CD4-positive, alpha-beta memory T cell (primary cell): ENCODE measurements at regions of chr15 and their contacts with region 1.

Region 1: GRCh38 chr15:33226559-33227181 is 32.2 kb upstream of the FMN1 start:
- DNase-seq: peak; percentile 65 to 84 (median 78)
- H3K4me3 ChIP-seq: no peak overlapping the region
- H3K4me3 Mint-ChIP-seq: peak overlapping the region in 4 of 8 donors; percentile 13 to 57 (median 25)
- H3K27ac ChIP-seq: no peak overlapping the region
- H3K27ac Mint-ChIP-seq: peak overlapping the region in 3 of 7 donors; percentile 64 to 77 (median 65)
- H3K4me1 ChIP-seq: peaks cover 18% of the 10 kb centered on the region
- H3K4me1 Mint-ChIP-seq: peaks cover 4 to 19% (median 14%) of the 10 kb centered on the region in 4 donors
- H3K27me3 ChIP-seq: no peaks in the 10 kb centered on the region
- H3K27me3 Mint-ChIP-seq: no peaks in the 10 kb centered on the region

Region 2: GRCh38 chr15:33086507-33087121 is 140.1 kb before region 1 on chr15:
- CTCF ChIA-PET with region 1: no interaction called
- POLR2A ChIA-PET with region 1: no interaction called
- intact Hi-C with region 1: loop called (anchors 5 kb)
- DNase-seq: peak in 4 of 5 donors; percentile 9 to 59 (median 44)
- H3K4me3 ChIP-seq: no peak overlapping the region
- H3K4me3 Mint-ChIP-seq: peak overlapping the region in 4 of 8 donors; percentile 55 to 65 (median 62)
- H3K27ac ChIP-seq: no peak overlapping the region
- H3K27ac Mint-ChIP-seq: peak overlapping the region in 3 of 7 donors; percentile 41 to 61 (median 60)
- H3K4me1 ChIP-seq: peaks cover 6% of the 10 kb centered on the region
- H3K4me1 Mint-ChIP-seq: peaks cover 0 to 34% (median 0%) of the 10 kb centered on the region in 4 donors
- H3K27me3 ChIP-seq: no peaks in the 10 kb centered on the region
- H3K27me3 Mint-ChIP-seq: peaks cover 0 to 3% of the 10 kb centered on the region in 2 donors